Uterus (tissue), 4 donors: ENCODE measurements at regions of chr19 and their contacts with region 1.

Region 1: DNA sequence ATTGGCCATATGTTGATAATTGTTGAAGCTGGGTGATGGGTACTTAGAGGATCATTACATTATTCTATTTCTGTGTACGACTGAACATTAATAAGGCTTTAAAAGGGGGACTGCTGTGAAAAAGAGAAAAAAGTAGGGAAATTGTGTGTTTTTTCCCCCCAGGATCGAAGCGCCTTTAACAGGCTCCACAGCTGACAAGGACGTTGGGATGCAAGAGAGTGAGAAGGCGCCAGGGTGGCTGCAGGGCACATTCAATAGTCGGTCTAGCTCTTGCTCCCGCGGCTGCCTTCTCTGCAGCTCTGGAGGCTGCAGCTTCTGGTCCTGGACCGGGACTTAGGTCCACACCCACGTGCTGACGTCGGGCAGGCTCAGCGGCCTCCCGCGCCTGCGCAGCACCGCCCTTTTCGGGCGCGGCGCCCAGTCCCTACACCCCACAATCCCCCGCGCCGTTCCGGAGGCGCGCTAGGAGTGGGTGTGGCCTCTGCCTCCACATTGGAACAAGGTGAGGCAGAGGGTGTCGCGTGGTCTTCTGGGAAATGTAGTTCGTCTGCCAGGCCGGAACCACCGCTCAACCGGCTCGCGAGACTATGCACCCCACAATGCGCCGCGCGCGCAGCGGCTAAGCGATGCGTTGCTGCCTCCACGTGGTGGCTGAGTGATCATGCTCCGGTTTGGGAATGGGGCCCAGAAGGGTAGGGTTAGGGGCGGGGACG is 4.9 kb upstream of the LRFN3 start:
- DNase-seq: peak; percentile 99
- H3K4me3 ChIP-seq: peak overlapping the region in 1 of 2 donors; percentile 1
- H3K27ac ChIP-seq: peak overlapping the region; percentile 58 to 70
- H3K4me1 ChIP-seq: peaks cover 0 to 5% of the 10 kb centered on the region in 2 donors
- H3K27me3 ChIP-seq: no peaks in the 10 kb centered on the region
- CTCF ChIP-seq: peak; percentile 90 to 100 (median 98)
- POLR2A ChIP-seq: peak; percentile 71 to 87

Region 2: DNA sequence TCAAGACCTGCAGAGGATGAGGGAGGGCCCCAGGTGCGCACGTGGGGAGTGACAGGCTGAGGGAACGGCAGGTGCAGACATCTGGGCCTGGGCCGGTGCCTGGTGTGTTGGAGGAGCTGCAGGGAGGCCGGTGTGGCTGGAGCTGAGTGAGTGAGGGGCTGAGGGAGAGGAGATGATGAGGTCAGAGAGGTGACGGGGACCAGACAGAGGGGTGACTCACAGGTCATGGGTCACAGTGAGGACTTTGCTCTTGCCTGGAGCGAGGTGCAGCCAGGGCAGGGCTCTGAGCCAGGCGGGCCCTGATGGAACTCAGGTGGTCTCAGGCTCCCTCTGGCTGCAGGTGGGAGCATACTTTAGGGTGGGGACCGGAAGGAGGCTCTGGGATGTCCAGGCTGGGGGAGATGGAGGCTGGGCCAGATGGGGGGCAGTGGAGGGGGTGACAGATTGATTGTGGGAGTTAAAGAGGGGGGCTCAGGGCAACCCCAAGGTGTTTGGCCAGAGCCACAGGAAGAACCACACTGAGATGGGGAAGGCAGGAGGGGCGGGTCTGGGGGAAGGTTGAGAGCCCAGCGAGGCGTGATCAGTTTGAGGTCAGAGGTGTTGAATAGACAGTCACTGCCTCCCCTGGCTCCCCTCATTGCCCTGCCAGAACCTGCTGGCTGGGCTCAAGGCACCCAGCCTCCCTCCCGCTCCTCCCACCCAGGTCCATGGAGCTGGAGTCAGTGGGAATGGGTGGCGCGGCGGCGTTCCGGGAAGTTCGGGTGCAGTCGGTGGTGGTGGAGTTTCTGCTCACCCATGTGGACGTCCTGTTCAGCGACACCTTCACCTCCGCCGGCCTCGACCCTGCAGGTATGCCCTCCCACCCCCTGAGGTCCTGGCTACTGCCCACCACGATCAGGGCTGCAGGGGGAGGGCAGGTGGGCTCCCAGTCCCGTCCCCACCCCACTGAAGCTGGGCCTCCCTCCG is 147.6 kb before region 1 on chr19:
- intact Hi-C with region 1: loop called (anchors 10 kb)
- DNase-seq: no peak
- H3K4me3 ChIP-seq: no peak overlapping the region
- H3K27ac ChIP-seq: no peak overlapping the region
- H3K4me1 ChIP-seq: no peaks in the 10 kb centered on the region
- H3K27me3 ChIP-seq: no peaks in the 10 kb centered on the region
- CTCF ChIP-seq: no peak
- POLR2A ChIP-seq: no peak

Region 3: DNA sequence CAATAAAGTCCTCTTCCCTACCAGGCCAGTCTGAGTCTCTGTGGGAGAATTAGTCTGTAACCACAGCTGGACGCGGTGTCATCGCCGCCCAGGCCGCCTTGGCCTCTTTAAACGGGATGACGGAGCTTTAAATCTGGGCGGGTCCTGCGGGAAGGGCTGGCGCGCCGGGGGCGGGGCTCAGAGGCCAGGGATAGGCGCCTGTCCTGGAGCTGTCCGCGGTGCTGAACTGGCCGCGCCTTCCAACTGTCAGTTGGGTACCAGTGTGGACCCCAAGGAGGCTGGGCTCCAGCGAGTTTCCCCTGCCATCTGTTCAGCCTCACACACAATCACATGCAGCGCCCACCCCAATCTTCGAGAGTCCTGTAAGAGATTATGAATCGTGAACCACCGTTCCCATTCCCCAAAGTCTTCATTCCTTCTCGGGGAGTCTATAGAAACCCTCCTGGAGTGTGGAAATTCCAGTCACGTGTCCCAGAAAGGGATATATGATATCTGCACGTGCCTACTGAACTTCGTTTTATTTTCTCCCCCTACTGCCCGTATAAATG is 51.5 kb before region 1 on chr19:
- intact Hi-C with region 1: loop called (anchors 10 kb)
- DNase-seq: peak; percentile 70 to 81
- H3K4me3 ChIP-seq: no peak overlapping the region
- H3K27ac ChIP-seq: no peak overlapping the region
- H3K4me1 ChIP-seq: no peaks in the 10 kb centered on the region
- H3K27me3 ChIP-seq: peaks cover 0 to 7% of the 10 kb centered on the region in 2 donors
- CTCF ChIP-seq: no peak
- POLR2A ChIP-seq: no peak